ENCODE measurements at regions of chr14 and their contacts with region 1.

Region 1: DNA sequence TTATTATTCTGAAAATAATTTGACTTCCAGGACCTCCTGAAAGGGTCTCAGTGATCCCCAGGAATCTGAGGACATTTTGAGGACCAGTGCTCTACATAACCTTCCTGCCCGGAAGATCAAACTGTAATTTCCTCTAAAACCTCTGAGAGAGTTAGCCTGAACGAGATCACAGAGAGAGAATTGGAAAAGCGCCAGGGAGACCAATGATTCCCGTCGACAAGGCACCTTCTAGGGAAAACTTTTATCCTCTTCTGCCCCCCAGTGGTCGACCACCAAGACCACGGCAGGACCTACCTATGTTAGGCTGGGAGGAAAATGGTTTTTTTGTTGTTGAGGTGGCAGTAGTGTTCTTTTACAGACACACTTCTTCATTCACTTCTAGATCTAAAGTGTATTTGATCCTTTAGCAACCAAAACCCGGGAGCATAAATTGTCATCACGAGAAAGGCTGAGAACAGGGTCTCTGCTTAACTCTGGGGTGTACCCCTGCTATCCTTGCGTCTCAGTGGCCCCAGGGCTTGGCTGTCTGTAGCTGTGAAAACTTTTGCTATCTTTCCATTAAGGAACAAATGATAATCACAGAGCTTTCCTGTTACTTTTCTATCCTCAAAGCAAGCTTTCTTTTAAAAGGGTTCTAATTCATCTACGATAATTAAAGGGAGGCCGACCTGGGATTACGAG is 62.9 kb upstream of the NID2 start:
- DNase-seq: peak; percentile 86
- H3K4me3 ChIP-seq: no peak overlapping the region
- H3K27ac ChIP-seq: no peak overlapping the region
- H3K4me1 ChIP-seq: peaks cover 3% of the 10 kb centered on the region
- H3K27me3 ChIP-seq: no peaks in the 10 kb centered on the region
- CTCF ChIP-seq: peak; percentile 65 to 78
- POLR2A ChIP-seq: no peak

Region 2: GRCh38 chr14:51780006-51780692 is 351.6 kb before region 1 on chr14:
- CTCF ChIA-PET with region 1: interaction called, 3 read pairs
- POLR2A ChIA-PET with region 1: no interaction called
- dilution Hi-C with region 1: no loop called
- intact Hi-C with region 1: loop called (anchors 1 kb)
- DNase-seq: peak; percentile 67
- H3K4me3 ChIP-seq: no peak overlapping the region
- H3K27ac ChIP-seq: no peak overlapping the region
- H3K4me1 ChIP-seq: peaks cover 3% of the 10 kb centered on the region
- H3K27me3 ChIP-seq: peaks cover 18 to 38% of the 10 kb centered on the region in 2 experiments
- CTCF ChIP-seq: peak; percentile 66 to 78
- POLR2A ChIP-seq: no peak

Region 3: GRCh38 chr14:51996148-51996746 is 135.5 kb before region 1 on chr14:
- CTCF ChIA-PET with region 1: interaction called, 9 read pairs
- POLR2A ChIA-PET with region 1: no interaction called
- dilution Hi-C with region 1: no loop called
- intact Hi-C with region 1: loop called (anchors 1 kb)
- DNase-seq: peak; percentile 66
- H3K4me3 ChIP-seq: no peak overlapping the region
- H3K27ac ChIP-seq: no peak overlapping the region
- H3K4me1 ChIP-seq: no peaks in the 10 kb centered on the region
- H3K27me3 ChIP-seq: no peaks in the 10 kb centered on the region
- CTCF ChIP-seq: peak; percentile 37 to 52
- POLR2A ChIP-seq: no peak

Region 4: DNA sequence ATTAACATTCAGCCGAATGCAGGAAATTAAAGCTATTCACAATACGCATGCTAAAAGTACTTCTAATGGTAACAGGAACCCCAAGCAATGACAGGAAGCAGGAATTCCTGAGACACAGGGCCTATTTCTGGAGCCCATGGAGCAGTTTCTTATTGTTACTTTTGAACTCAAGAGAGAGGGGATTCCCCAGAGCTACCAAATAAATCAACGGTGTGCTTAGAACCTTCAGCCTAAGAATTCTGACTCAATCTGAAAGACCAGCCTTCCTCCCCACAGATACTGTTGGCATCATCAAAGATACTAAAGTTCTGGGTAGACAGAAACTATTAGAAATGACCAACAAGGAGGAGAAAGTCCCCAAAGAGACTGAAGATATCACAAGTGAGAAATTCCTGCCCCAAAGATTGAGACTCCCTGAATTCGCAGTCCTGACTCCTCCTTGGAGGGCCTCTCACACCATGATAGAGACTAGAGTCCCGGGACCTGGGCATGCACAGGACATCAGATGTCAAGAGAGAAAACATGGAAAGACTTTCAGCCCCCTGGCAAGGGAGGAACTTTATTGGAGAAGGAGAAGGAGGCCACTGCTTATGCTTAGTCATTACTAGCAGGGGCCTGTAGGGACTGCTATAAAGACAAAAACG is 109.7 kb before region 1 on chr14:
- CTCF ChIA-PET with region 1: no interaction called
- POLR2A ChIA-PET with region 1: no interaction called
- dilution Hi-C with region 1: no loop called
- intact Hi-C with region 1: loop called (anchors 1 kb)
- DNase-seq: peak; percentile 89
- H3K4me3 ChIP-seq: no peak overlapping the region
- H3K27ac ChIP-seq: peak overlapping the region; percentile 88
- H3K4me1 ChIP-seq: peaks cover 72% of the 10 kb centered on the region
- H3K27me3 ChIP-seq: no peaks in the 10 kb centered on the region
- CTCF ChIP-seq: no peak
- POLR2A ChIP-seq: peak; percentile 22

Region 5: DNA sequence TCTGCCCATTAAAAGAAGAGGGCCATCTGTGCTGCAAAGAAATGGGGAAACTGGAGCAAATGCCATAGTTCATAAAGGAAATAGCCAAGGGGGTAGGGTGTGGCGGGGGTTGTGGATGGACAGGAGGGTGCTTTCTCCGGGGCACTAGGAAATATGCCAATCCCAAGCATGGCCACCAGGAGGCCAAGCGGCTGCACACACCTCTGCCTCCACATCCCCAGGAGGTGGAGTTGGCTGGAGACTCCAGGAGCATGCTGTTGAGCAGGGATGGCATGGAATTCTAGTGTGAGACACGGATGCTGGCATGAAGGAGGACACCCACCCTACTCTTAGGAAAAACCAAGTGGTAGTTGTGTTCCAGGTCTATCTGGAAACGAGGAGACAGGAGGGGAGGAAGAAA is 88.1 kb before region 1 on chr14:
- CTCF ChIA-PET with region 1: no interaction called
- POLR2A ChIA-PET with region 1: no interaction called
- dilution Hi-C with region 1: no loop called
- intact Hi-C with region 1: loop called (anchors 1 kb)
- DNase-seq: peak; percentile 37
- H3K4me3 ChIP-seq: no peak overlapping the region
- H3K27ac ChIP-seq: no peak overlapping the region
- H3K4me1 ChIP-seq: peaks cover 4% of the 10 kb centered on the region
- H3K27me3 ChIP-seq: peaks cover 0 to 2% of the 10 kb centered on the region in 2 experiments
- CTCF ChIP-seq: peak; percentile 54 to 76
- POLR2A ChIP-seq: no peak

Region 6: DNA sequence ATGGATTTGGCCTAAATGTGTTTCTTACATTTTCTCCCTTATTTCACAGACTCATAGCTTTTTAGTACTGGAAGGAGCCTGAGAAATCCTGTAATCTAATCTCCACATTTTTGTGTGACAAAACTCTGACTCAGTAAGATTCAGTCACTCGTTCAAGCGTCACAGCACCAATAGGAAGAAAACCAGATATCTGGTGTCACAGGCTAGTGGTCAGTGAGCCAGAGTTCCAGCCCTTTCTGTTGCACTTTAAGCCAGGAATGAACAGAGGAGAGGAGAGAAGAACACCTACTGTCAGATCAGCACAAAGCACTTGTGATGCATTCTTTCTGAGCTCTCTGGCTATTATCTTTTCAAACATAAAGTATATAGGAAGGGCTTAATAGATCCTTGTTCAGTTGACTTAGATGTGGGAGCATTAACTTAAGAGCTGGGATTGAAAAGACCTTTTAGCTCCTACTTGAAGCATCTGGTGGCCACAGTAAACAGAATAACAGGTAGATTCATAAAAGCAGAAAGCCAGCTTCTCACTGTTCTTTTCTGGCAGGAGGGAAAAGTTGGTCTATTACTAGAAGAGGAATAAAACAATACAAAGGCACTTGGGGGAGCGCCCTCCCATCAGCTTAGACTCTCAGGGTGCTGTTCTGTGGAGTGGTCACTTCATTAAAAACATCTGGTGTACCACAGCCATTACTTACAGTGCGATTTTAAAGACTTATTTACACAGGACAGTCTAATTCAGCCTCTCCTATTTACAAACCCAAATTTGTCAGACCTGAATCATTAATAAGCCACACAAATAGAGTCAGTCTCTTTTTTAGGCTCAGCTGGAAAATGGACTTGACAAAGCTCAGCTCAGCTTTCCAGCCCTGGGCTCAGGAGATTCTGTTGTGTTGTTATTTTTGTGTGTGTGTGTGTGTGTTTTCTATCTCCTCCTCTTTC is 50.7 kb before region 1 on chr14:
- CTCF ChIA-PET with region 1: no interaction called
- POLR2A ChIA-PET with region 1: no interaction called
- dilution Hi-C with region 1: no loop called
- intact Hi-C with region 1: loop called (anchors 2 kb)
- DNase-seq: peak; percentile 26
- H3K4me3 ChIP-seq: no peak overlapping the region
- H3K27ac ChIP-seq: no peak overlapping the region
- H3K4me1 ChIP-seq: peaks cover 47% of the 10 kb centered on the region
- H3K27me3 ChIP-seq: no peaks in the 10 kb centered on the region
- CTCF ChIP-seq: no peak
- POLR2A ChIP-seq: no peak

Region 7: GRCh38 chr14:52166822-52167221 is 35.0 kb after region 1 on chr14:
- CTCF ChIA-PET with region 1: no interaction called
- POLR2A ChIA-PET with region 1: no interaction called
- dilution Hi-C with region 1: no loop called
- intact Hi-C with region 1: no loop called
- DNase-seq: no peak
- H3K4me3 ChIP-seq: no peak overlapping the region
- H3K27ac ChIP-seq: no peak overlapping the region
- H3K4me1 ChIP-seq: no peaks in the 10 kb centered on the region
- H3K27me3 ChIP-seq: no peaks in the 10 kb centered on the region
- CTCF ChIP-seq: no peak
- POLR2A ChIP-seq: no peak

Region 8: DNA sequence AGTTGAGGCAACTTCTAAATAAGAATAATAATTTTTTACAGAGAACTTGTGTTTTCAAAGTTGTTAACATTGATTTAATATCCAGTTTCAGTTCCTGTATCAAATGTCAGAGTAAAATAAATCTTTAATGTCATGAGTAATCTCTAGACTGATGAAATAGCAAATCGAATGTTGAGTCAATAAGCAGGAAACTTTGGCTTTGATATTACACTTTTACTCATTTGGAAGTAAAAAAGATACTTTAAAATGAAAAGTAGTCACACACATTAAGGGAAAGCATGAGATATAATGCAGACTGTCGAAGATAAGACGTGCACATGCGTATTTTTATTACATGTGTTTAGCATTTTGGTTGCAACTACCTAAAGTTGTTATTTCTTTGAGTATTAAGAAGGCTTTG is 57.5 kb after region 1 on chr14:
- CTCF ChIA-PET with region 1: no interaction called
- POLR2A ChIA-PET with region 1: no interaction called
- dilution Hi-C with region 1: no loop called
- intact Hi-C with region 1: no loop called
- DNase-seq: no peak
- H3K4me3 ChIP-seq: no peak overlapping the region
- H3K27ac ChIP-seq: no peak overlapping the region
- H3K4me1 ChIP-seq: no peaks in the 10 kb centered on the region
- H3K27me3 ChIP-seq: peaks cover 0 to 6% of the 10 kb centered on the region in 2 experiments
- CTCF ChIP-seq: no peak
- POLR2A ChIP-seq: no peak

Measured in endothelial cell of umbilical vein (primary cell).